ENCODE measurements at regions of chr10 and their contacts with region 1.

Region 1: GRCh38 chr10:62992145-62992721 is 140.9 kb upstream of the NRBF2 start:
- DNase-seq: no peak
- H3K4me3 Mint-ChIP-seq: peak overlapping the region; percentile 50
- H3K27ac Mint-ChIP-seq: peak overlapping the region; percentile 89
- H3K4me1 Mint-ChIP-seq: peaks cover 66% of the 10 kb centered on the region
- H3K27me3 Mint-ChIP-seq: no peaks in the 10 kb centered on the region

Region 2: GRCh38 chr10:62610649-62611229 is 381.5 kb before region 1 on chr10:
- intact Hi-C with region 1: loop called (anchors 5 kb)
- DNase-seq: peak; percentile 58
- H3K4me3 Mint-ChIP-seq: no peak overlapping the region
- H3K27ac Mint-ChIP-seq: no peak overlapping the region
- H3K4me1 Mint-ChIP-seq: peaks cover 52% of the 10 kb centered on the region
- H3K27me3 Mint-ChIP-seq: peaks cover 5% of the 10 kb centered on the region

Region 3: DNA sequence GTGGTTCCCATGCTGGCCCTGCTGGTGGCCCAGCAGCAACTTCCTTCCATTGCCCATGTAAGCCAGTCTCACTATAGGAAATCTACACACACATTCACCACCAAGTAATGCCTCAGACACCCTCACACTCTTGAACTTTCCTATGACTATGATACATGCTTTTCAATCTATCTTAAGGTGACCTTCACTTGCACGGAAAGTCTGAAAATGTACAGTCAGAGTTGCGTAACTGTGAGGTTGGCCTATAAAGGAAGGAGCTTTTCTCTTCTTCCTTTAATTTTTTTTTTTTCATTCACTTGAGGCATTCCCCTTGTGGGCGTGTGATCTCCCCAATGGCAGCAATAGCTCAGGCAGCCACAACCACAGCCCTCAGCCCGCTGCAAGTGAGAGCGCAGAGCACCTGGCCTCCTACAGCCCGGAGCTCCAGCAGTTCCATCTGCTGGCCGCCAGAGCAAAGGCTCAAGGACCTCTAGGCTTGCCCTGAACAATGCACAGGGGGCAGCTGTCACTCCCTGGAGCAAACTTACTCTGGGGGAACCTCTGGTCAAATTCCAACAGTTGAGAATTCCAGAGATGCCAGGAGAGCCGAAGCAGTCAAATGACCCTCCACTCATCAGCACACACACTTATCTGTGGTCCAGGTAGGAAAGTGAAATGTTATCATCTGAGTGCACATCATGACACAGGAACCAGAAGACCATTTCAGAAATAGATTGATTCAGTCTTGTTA is 310.9 kb before region 1 on chr10:
- intact Hi-C with region 1: loop called (anchors 1 kb)
- DNase-seq: peak; percentile 63
- H3K4me3 Mint-ChIP-seq: no peak overlapping the region
- H3K27ac Mint-ChIP-seq: peak overlapping the region; percentile 58
- H3K4me1 Mint-ChIP-seq: peaks cover 45% of the 10 kb centered on the region
- H3K27me3 Mint-ChIP-seq: no peaks in the 10 kb centered on the region

Region 4: DNA sequence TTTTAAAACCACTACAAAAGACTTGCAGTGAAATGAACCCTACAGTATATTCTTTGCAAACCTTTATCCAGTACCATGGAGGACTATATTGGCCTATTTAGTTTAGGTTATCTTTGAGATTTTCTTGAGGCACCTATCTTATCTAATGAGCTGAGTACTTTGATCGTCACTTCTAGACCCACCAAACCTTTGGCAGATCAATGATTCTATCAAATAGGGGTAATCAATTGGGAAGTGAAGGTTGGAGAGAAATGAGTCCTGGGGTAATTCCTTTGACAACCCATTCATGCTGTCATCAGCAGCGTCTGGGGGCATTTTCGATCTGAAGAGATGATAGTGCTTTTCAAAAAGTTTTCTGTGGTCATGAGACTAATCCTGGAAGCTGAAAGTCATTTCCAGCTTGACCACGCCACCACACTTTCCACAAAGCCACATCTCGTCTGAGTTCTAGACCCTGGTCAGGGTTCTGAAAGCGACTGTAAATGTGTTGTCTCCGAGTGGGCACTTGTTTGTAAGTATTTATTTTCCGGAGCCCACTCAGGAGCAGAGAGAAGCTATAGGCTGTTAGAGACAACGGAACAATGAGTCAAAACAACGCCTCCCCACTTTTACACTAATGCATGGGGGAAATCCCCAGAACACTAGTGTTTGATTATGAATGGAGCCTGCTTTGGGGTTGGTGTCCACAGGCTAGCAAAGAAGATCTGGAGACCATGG is 180.9 kb before region 1 on chr10:
- intact Hi-C with region 1: loop called (anchors 1 kb)
- DNase-seq: peak; percentile 58
- H3K4me3 Mint-ChIP-seq: peak overlapping the region; percentile 97
- H3K27ac Mint-ChIP-seq: peak overlapping the region; percentile 83
- H3K4me1 Mint-ChIP-seq: peaks cover 67% of the 10 kb centered on the region
- H3K27me3 Mint-ChIP-seq: peaks cover 2% of the 10 kb centered on the region

Region 5: GRCh38 chr10:62916141-62916603 is 76.1 kb before region 1 on chr10:
- intact Hi-C with region 1: no loop called
- DNase-seq: no peak
- H3K4me3 Mint-ChIP-seq: no peak overlapping the region
- H3K27ac Mint-ChIP-seq: no peak overlapping the region
- H3K4me1 Mint-ChIP-seq: peaks cover 4% of the 10 kb centered on the region
- H3K27me3 Mint-ChIP-seq: peaks cover 8% of the 10 kb centered on the region

Region 6: GRCh38 chr10:62980687-62981086 is 11.5 kb before region 1 on chr10:
- intact Hi-C with region 1: loop called (anchors 1 kb)
- DNase-seq: no peak
- H3K4me3 Mint-ChIP-seq: no peak overlapping the region
- H3K27ac Mint-ChIP-seq: peak overlapping the region; percentile 88
- H3K4me1 Mint-ChIP-seq: peaks cover 44% of the 10 kb centered on the region
- H3K27me3 Mint-ChIP-seq: no peaks in the 10 kb centered on the region

Region 7: GRCh38 chr10:63068246-63068645 is 76.0 kb after region 1 on chr10:
- intact Hi-C with region 1: loop called (anchors 1 kb)
- DNase-seq: no peak
- H3K4me3 Mint-ChIP-seq: no peak overlapping the region
- H3K27ac Mint-ChIP-seq: peak overlapping the region; percentile 75
- H3K4me1 Mint-ChIP-seq: peaks cover 51% of the 10 kb centered on the region
- H3K27me3 Mint-ChIP-seq: peaks cover 3% of the 10 kb centered on the region

Region 8: GRCh38 chr10:63133056-63133820 is 141.0 kb after region 1 on chr10 and contains the start of gene NRBF2:
- intact Hi-C with region 1: loop called (anchors 1 kb)
- DNase-seq: peak; percentile 96
- H3K4me3 Mint-ChIP-seq: peak within 1 kb of the TSS; percentile 94
- H3K27ac Mint-ChIP-seq: peak within 1 kb of the TSS; percentile 95
- H3K4me1 Mint-ChIP-seq: peaks cover 19% of the 10 kb centered on the region
- H3K27me3 Mint-ChIP-seq: peaks cover 3% of the 10 kb centered on the region
- total RNA-seq, gene NRBF2: 32.2 and 32.7 TPM in 2 replicates

Measured in activated T-helper 2 cell treated with anti-CD3 and anti-CD28 coated beads, Interferon-gamma antibody, Interleukin-2, Interleukin-4, amounts not matched to agents 10 μg/mL and 5 μg/mL and 100 μg/mL, durations not matched to agents 14 hours and 24 hours and 36 hours (primary cell).